HCT116 (cell line): ENCODE measurements at regions of chr11 and their contacts with region 1.

Region 1: DNA sequence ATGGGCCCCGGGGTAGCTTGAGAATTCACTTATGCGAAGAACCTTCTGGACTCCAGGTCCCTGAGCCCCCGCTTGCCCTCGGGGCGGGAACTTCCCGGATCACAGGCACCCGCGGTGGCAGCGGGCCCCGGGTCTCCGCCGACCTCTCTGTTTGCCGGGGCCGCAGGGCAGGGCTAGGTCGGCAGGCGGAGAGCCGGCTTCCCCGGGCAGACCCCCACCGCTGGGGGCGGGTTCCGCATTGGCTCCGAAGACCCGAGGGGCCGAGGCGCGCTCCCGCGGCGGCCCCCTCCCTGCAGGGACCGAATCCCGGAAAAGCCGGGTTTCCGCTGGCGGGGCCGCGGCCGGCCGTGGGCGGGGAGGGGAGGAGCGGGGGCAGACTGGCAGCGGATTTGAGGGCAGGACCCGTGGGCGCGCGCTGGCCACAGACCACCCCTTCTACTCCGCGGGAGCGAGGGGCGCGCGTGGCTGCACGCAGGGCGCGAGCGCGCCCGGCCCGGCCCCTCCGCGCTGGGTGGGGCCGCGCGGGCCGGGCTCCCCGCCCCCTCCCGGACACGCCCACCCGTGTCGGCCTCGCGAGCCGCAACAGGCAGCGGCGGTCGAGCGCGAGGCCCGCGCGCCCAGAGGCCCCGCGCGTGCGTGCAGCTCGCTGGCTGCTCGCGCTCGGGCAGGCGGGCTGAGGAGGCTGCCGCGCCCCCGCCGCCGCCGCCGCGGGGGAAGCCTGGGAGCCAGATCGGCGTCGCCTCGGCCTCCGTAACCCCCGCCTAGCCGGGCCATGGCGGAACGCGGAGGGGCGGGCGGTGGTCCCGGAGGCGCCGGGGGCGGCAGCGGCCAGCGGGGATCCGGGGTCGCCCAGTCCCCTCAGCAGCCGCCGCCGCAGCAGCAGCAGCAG is at the start of gene PACS1:
- DNase-seq: no peak
- ATAC-seq: peak; percentile 77
- H3K4me3 ChIP-seq: peak within 1 kb of the TSS; percentile 69 to 70
- H3K27ac ChIP-seq: peak within 1 kb of the TSS; percentile 89
- H3K4me1 ChIP-seq: peaks cover 10 to 21% of the 10 kb centered on the region in 2 experiments
- H3K27me3 ChIP-seq: no peaks in the 10 kb centered on the region
- CTCF ChIP-seq: no peak
- POLR2A ChIP-seq: no peak
- RAD21 ChIP-seq: no peak
- total RNA-seq, gene PACS1: 41.1 TPM

Region 2: GRCh38 chr11:66081505-66081904 is 11.5 kb after region 1 on chr11:
- CTCF ChIA-PET with region 1: interaction called, 11 read pairs
- POLR2A ChIA-PET with region 1: no interaction called
- RAD21 ChIA-PET with region 1: no interaction called
- intact Hi-C with region 1: no loop called
- DNase-seq: no peak
- ATAC-seq: peak; percentile 33; the same call in 1 of the 2 replicates
- H3K4me3 ChIP-seq: no peak overlapping the region
- H3K27ac ChIP-seq: no peak overlapping the region
- H3K4me1 ChIP-seq: peaks cover 46 to 62% of the 10 kb centered on the region in 2 experiments
- H3K27me3 ChIP-seq: no peaks in the 10 kb centered on the region
- CTCF ChIP-seq: no peak
- POLR2A ChIP-seq: no peak
- RAD21 ChIP-seq: no peak

Region 3: DNA sequence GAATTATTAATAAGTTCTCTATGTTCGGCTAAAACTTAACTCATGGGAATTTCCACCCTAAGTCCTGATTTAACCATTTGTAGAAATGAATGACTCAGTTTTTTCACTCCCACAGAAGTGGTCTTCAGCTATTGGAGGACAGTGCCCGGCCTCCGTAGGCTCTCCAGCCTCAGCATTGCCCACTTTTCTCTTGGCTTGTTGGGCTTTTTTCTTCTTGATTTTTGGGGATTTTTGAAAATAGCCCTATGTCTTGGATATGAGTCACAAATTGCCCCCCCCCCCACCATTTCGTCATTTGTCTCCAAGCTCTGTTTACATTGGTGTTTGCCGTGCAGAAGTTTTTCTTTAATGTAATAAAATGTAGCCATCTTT is 66.8 kb after region 1 on chr11:
- CTCF ChIA-PET with region 1: interaction called, 5 read pairs
- POLR2A ChIA-PET with region 1: no interaction called
- RAD21 ChIA-PET with region 1: interaction called in 1 of 2 experiments, 3 read pairs
- intact Hi-C with region 1: loop called (anchors 2 kb)
- DNase-seq: no peak
- ATAC-seq: no peak
- H3K4me3 ChIP-seq: no peak overlapping the region
- H3K27ac ChIP-seq: no peak overlapping the region
- H3K4me1 ChIP-seq: peaks cover 13% of the 10 kb centered on the region in 2 experiments
- H3K27me3 ChIP-seq: no peaks in the 10 kb centered on the region
- CTCF ChIP-seq: no peak
- POLR2A ChIP-seq: no peak
- RAD21 ChIP-seq: no peak